IMR-90 (cell line): ENCODE measurements at regions of chr12 and their contacts with region 1.

Region 1: DNA sequence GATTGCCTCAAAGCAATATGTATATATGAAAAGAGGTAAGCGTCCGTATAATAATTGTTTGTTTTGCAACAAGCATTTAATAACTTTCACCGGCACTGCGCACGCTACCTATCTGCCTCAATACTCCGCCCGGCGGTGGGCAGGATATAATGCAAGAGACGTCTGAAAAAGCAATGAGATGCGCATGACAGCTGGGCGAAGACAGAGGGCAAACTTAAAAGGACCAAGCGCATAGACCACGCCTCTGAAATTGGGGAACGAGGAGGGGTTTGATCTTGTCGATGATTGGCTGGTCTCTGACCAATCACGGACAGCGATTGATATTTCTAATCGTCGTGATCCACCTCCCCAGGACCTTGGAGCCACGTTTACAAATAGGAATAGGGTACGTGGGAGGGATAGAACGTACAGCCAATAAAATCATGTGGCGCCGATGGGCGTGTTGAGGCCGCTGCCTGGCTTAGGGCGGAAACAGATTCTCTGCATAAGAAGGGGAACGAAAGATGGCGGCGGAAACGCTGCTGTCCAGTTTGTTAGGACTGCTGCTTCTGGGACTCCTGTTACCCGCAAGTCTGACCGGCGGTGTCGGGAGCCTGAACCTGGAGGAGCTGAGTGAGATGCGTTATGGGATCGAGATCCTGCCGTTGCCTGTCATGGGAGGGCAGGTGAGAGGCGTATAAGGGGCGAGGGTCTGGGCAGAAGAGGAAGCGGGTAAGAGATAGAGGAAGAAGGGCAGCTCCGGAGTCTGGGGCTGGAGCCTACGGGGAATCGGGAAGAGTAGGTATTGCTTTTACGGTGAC is at the start of gene OS9:
- DNase-seq: peak; percentile 100
- ATAC-seq: peak; percentile 97
- H3K4me3 ChIP-seq: peak within 1 kb of the TSS; percentile 73
- H3K27ac ChIP-seq: peak within 1 kb of the TSS; percentile 75
- H3K4me1 ChIP-seq: 0 out of 2 replicates have a peak, but pooled peaks cover 3% of the 10 kb centered on the region
- H3K27me3 ChIP-seq: no peaks in the 10 kb centered on the region
- CTCF ChIP-seq: peak; percentile 90
- POLR2A ChIP-seq: peak; percentile 88
- RAD21 ChIP-seq: peak; percentile 59
- total RNA-seq, gene OS9: 159 and 182 TPM in 2 replicates

Region 2: GRCh38 chr12:57632694-57633477 is 61.0 kb before region 1 on chr12 and contains the start of gene B4GALNT1:
- CTCF ChIA-PET with region 1: interaction called, 4 read pairs
- POLR2A ChIA-PET with region 1: no interaction called
- dilution Hi-C with region 1: no loop called
- in situ Hi-C with region 1: no loop called
- intact Hi-C with region 1: loop called (anchors 2 kb)
- DNase-seq: peak; percentile 45
- ATAC-seq: peak; percentile 97
- H3K4me3 ChIP-seq: peak within 1 kb of the TSS; percentile 43
- H3K27ac ChIP-seq: no peak within 1 kb of the TSS
- H3K4me1 ChIP-seq: peaks cover 2% of the 10 kb centered on the region; the same call in 1 of the 2 replicates
- H3K27me3 ChIP-seq: peaks cover 41% of the 10 kb centered on the region
- CTCF ChIP-seq: peak; percentile 81
- POLR2A ChIP-seq: no peak
- RAD21 ChIP-seq: peak; percentile 64
- total RNA-seq, gene B4GALNT1: 0.18 and 0.28 TPM in 2 replicates

Region 3: GRCh38 chr12:57657744-57658143 is 36.1 kb before region 1 on chr12:
- CTCF ChIA-PET with region 1: no interaction called
- POLR2A ChIA-PET with region 1: no interaction called
- dilution Hi-C with region 1: no loop called
- in situ Hi-C with region 1: no loop called
- intact Hi-C with region 1: no loop called
- DNase-seq: peak; percentile 5
- ATAC-seq: no peak
- H3K4me3 ChIP-seq: no peak overlapping the region
- H3K27ac ChIP-seq: no peak overlapping the region
- H3K4me1 ChIP-seq: no peaks in the 10 kb centered on the region
- H3K27me3 ChIP-seq: peaks cover 5% of the 10 kb centered on the region; the same call in 1 of the 2 replicates
- CTCF ChIP-seq: no peak
- POLR2A ChIP-seq: no peak
- RAD21 ChIP-seq: no peak

Region 4: DNA sequence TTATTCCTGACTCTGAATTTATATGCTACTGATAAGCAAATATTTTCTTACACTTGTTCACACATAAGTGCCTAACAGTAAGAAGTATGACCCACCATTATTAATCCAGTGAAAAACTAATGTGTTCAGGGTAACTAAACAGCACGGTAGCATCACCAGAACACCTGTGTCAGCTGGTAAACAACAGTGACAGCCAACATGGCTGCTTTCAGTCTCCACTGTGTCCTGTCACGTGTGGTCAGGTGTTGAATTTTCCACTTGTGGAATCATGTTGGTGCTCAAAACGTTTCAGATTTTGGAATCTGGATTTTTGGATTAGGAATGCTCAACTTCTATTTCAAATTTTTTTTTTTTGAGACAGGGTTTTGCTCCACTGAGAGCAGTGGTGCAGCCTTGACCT is 233.2 kb after region 1 on chr12:
- CTCF ChIA-PET with region 1: no interaction called
- POLR2A ChIA-PET with region 1: no interaction called
- dilution Hi-C with region 1: no loop called
- in situ Hi-C with region 1: no loop called
- intact Hi-C with region 1: no loop called
- DNase-seq: no peak
- ATAC-seq: no peak
- H3K4me3 ChIP-seq: no peak overlapping the region
- H3K27ac ChIP-seq: no peak overlapping the region
- H3K4me1 ChIP-seq: no peaks in the 10 kb centered on the region
- H3K27me3 ChIP-seq: no peaks in the 10 kb centered on the region; the same call in 1 of the 2 replicates
- CTCF ChIP-seq: no peak
- POLR2A ChIP-seq: no peak
- RAD21 ChIP-seq: no peak